ENCODE measurements at regions of chr7 and their contacts with region 1.

Region 1: DNA sequence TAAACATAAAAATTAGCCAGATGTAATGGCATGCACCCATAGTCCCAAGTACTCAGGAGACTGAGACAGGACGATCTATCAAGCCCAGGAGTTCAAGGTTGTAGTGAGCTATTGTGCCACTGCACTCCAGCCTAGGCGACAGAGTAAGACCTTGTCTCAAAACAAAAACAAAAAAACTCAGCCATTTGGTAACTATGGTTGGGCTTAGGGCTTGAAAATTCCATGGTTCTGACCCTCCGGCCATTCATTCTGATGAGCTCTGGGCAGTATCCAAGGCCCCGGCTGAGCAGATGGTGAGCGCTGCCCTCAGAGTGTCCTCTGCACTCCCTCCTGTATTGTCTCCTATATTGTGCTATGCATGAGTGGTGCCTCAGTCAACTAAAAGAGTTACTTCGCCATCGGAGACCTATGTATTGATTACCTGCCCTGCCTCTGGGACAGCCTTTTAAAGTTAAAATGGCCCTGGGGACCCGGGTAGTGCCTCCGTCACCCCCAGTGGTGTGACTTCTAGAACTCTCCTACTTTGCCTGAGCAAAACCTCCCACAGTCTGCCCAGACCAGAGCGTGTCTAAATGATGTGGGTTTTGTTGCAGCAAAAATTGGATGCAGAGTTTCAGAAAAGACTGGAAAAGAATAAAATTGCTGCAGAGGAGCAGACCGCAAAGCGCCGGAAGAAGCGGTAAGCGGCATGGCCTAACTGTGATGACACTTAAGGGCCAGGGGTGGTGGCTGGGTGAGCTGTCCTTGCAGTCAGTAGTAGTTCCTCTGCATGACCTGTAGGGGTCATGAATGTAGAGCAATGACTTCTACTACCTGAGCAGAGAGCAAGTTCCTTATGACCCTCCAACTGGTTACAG is 8.1 kb downstream of the PRKRIP1 start:
- DNase-seq: no peak
- ATAC-seq: peak; percentile 88
- H3K4me3 ChIP-seq: no peak overlapping the region
- H3K27ac ChIP-seq: peak overlapping the region; percentile 6; the same call in 1 of the 2 replicates
- H3K4me1 ChIP-seq: peaks cover 40% of the 10 kb centered on the region
- H3K27me3 ChIP-seq: no peaks in the 10 kb centered on the region
- CTCF ChIP-seq: peak; percentile 87 to 90 (median 89)
- EP300 ChIP-seq: no peak
- POLR2A ChIP-seq: no peak
- RAD21 ChIP-seq: peak; percentile 84

Region 2: GRCh38 chr7:102111744-102112105 is 292.5 kb before region 1 on chr7:
- CTCF ChIA-PET with region 1: no interaction called
- POLR2A ChIA-PET with region 1: no interaction called
- RAD21 ChIA-PET with region 1: no interaction called
- SMC1A ChIA-PET with region 1: no interaction called
- in situ Hi-C with region 1: no loop called
- intact Hi-C with region 1: no loop called
- DNase-seq: no peak
- ATAC-seq: no peak
- H3K4me3 ChIP-seq: no peak overlapping the region
- H3K27ac ChIP-seq: no peak overlapping the region
- H3K4me1 ChIP-seq: no peaks in the 10 kb centered on the region
- H3K27me3 ChIP-seq: no peaks in the 10 kb centered on the region
- CTCF ChIP-seq: no peak
- EP300 ChIP-seq: no peak
- POLR2A ChIP-seq: no peak
- RAD21 ChIP-seq: no peak

Region 3: DNA sequence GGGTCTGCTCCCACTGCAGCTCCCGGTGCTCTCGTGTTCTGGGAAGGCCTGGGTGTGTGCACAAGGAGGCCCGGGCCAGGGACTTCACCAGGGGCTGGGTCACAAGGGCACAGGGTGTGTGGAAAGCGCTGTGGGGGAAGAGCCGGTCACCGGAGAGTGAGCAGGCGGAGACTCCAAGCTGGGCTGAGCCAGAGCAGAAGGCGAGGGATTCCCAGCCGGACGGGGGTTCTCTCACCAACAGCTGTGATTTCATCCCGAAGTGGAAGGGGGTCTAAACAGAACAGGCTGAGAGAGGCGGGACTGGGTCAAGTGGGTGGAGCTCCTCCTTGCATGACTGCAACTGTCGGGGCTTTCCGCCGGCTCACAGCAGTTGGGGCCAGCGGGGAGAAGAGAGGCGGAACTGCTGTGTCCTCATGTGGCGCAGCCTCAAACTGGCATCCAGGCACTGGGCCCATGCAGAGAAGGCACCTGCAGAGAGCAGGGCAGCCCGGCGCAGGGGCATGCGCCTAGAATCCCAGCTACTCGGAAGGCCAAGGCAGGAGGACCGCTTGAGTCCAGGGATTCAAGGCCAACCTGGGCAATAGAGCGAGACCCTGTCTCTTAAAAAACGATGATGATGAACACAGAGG is 21.5 kb after region 1 on chr7:
- CTCF ChIA-PET with region 1: interaction called, 32 read pairs
- POLR2A ChIA-PET with region 1: interaction called, 21 read pairs
- RAD21 ChIA-PET with region 1: interaction called, 26 read pairs
- SMC1A ChIA-PET with region 1: interaction called, 89 read pairs
- in situ Hi-C with region 1: no loop called
- intact Hi-C with region 1: loop called (anchors 1 kb)
- DNase-seq: peak; percentile 84
- ATAC-seq: peak; percentile 84
- H3K4me3 ChIP-seq: peak overlapping the region; percentile 51; the same call in 1 of the 2 replicates
- H3K27ac ChIP-seq: peak overlapping the region; percentile 99
- H3K4me1 ChIP-seq: peaks cover 53% of the 10 kb centered on the region
- H3K27me3 ChIP-seq: no peaks in the 10 kb centered on the region
- CTCF ChIP-seq: no peak
- EP300 ChIP-seq: peak; percentile 78 to 86; a peak in 3 of 4 replicates
- POLR2A ChIP-seq: peak; percentile 91
- RAD21 ChIP-seq: no peak

Region 4: GRCh38 chr7:102433219-102434038 is 29.2 kb after region 1 on chr7 and contains the start of gene ORAI2:
- CTCF ChIA-PET with region 1: interaction called, 39 read pairs
- POLR2A ChIA-PET with region 1: interaction called, 5 read pairs
- RAD21 ChIA-PET with region 1: interaction called, 13 read pairs
- SMC1A ChIA-PET with region 1: interaction called, 89 read pairs
- in situ Hi-C with region 1: no loop called
- intact Hi-C with region 1: no loop called
- DNase-seq: no peak
- ATAC-seq: peak; percentile 58
- H3K4me3 ChIP-seq: peak within 1 kb of the TSS; percentile 74
- H3K27ac ChIP-seq: peak within 1 kb of the TSS; percentile 93
- H3K4me1 ChIP-seq: peaks cover 34% of the 10 kb centered on the region
- H3K27me3 ChIP-seq: no peaks in the 10 kb centered on the region
- CTCF ChIP-seq: 0 out of 6 replicates have a peak, but pooled peaks of 1 of the 3 experiments have one; percentile 2
- EP300 ChIP-seq: no peak
- POLR2A ChIP-seq: peak; percentile 86
- RAD21 ChIP-seq: no peak
- polyA plus RNA-seq, gene ORAI2: 5.8 to 8.0 TPM

Region 5: DNA sequence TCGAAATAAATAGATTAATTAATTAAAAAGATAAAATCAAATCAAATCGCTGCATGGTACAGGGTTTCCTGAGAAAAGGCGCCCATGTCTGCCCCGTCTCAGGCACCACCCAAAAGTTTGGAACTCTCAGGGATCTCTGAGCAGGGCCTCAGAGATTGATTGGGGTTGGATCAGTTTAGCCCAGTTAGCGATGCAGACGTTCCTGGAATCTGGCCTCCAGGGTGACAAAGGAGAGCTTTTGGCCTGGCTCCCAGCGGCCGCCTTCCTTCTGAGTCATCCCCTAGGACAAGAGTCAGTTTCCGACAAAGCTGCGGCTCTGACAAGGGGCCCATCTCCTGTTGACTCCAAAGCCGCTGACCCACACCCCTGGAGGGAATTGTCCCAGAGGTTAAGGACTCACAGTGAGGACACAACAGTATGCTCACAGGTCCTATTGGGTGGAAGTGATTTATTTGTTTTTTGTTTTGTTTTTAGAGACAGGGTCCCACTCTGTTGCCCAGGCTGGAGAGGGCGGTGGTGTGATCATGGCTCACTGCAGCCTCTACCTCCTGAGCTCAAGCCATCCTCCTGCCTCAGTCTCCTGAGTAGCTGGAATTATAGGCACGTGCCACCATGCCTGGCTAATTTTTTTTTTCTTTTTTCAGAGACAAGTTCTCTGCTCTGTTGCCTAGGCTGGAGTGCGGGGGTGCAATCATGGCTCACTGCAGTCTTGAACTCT is 36.0 kb after region 1 on chr7:
- CTCF ChIA-PET with region 1: interaction called, 40 read pairs
- POLR2A ChIA-PET with region 1: interaction called, 24 read pairs
- RAD21 ChIA-PET with region 1: interaction called, 13 read pairs
- SMC1A ChIA-PET with region 1: interaction called, 76 read pairs
- in situ Hi-C with region 1: no loop called
- intact Hi-C with region 1: loop called (anchors 1 kb)
- DNase-seq: no peak
- ATAC-seq: no peak
- H3K4me3 ChIP-seq: no peak overlapping the region
- H3K27ac ChIP-seq: peak overlapping the region; percentile 99; the same call in 1 of the 2 replicates
- H3K4me1 ChIP-seq: peaks cover 44% of the 10 kb centered on the region
- H3K27me3 ChIP-seq: no peaks in the 10 kb centered on the region
- CTCF ChIP-seq: no peak
- EP300 ChIP-seq: no peak
- POLR2A ChIP-seq: no peak
- RAD21 ChIP-seq: no peak

Region 6: DNA sequence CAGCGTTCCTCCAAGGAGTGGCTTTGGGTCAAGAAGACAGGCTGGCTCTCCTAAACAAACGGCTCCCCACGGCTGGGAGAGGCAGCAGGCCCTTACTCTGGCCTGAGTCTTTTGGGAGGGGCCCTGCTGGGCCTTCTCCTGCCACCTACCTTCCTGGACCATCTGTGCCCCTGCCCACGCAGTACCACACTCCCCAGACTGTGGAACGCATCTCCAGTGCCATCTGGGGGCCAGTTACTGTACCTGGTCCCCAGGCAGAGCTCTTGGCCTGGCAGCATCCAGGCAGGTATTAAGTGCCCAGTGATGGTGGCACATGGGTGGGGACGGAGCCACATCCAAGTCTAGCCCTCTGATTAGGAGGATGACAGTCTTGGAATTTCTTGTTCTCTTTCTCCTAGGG is 46.0 kb after region 1 on chr7:
- CTCF ChIA-PET with region 1: interaction called, 101 read pairs
- POLR2A ChIA-PET with region 1: interaction called, 3 read pairs
- RAD21 ChIA-PET with region 1: interaction called, 40 read pairs
- SMC1A ChIA-PET with region 1: interaction called, 76 read pairs
- in situ Hi-C with region 1: loop called (anchors 10 kb)
- intact Hi-C with region 1: loop called (anchors 1 kb)
- DNase-seq: no peak
- ATAC-seq: peak; percentile 91
- H3K4me3 ChIP-seq: no peak overlapping the region
- H3K27ac ChIP-seq: no peak overlapping the region
- H3K4me1 ChIP-seq: peaks cover 10% of the 10 kb centered on the region
- H3K27me3 ChIP-seq: no peaks in the 10 kb centered on the region
- CTCF ChIP-seq: peak; percentile 59 to 76 (median 66)
- EP300 ChIP-seq: no peak
- POLR2A ChIP-seq: peak; percentile 72
- RAD21 ChIP-seq: peak; percentile 80

Region 7: DNA sequence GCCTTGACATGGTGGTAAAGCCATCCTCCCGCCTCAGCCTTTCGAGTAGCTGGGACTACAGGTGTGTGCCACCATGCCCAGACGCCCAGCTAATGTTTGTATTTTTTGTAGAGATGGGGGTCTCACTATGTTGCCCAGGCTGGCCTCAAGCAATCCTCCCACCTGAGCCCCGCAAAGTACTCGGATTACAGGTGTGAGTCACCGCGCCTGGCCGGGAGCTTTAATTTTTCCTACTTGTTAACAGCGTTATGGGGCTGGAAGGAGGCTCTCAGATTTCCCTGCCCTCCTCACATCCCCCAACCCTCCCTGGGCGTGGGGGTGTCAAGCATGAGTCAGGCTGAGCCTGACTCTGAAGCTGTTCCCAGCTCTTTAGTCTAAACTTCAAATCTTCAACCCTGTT is 52.1 kb after region 1 on chr7:
- CTCF ChIA-PET with region 1: interaction called, 101 read pairs
- POLR2A ChIA-PET with region 1: no interaction called
- RAD21 ChIA-PET with region 1: interaction called, 6 read pairs
- SMC1A ChIA-PET with region 1: interaction called, 5 read pairs
- in situ Hi-C with region 1: loop called (anchors 10 kb)
- intact Hi-C with region 1: no loop called
- DNase-seq: no peak
- ATAC-seq: no peak
- H3K4me3 ChIP-seq: no peak overlapping the region
- H3K27ac ChIP-seq: no peak overlapping the region
- H3K4me1 ChIP-seq: no peaks in the 10 kb centered on the region
- H3K27me3 ChIP-seq: no peaks in the 10 kb centered on the region
- CTCF ChIP-seq: no peak
- EP300 ChIP-seq: no peak
- POLR2A ChIP-seq: no peak
- RAD21 ChIP-seq: no peak

Region 8: GRCh38 chr7:102464577-102465280 is 60.5 kb after region 1 on chr7 and contains the starts of genes ALKBH4 and LRWD1:
- CTCF ChIA-PET with region 1: interaction called, 94 read pairs
- POLR2A ChIA-PET with region 1: interaction called, 5 read pairs
- RAD21 ChIA-PET with region 1: interaction called, 7 read pairs
- SMC1A ChIA-PET with region 1: interaction called, 32 read pairs
- in situ Hi-C with region 1: loop called (anchors 10 kb)
- intact Hi-C with region 1: no loop called
- DNase-seq: no peak
- ATAC-seq: peak; percentile 94
- H3K4me3 ChIP-seq: peak within 1 kb of the TSS; percentile 93
- H3K27ac ChIP-seq: peak within 1 kb of the TSS; percentile 89
- H3K4me1 ChIP-seq: peaks cover 15% of the 10 kb centered on the region
- H3K27me3 ChIP-seq: no peaks in the 10 kb centered on the region
- CTCF ChIP-seq: peak in 2 of 3 experiments; percentile 12 to 38; a peak in 4 of 6 replicates
- EP300 ChIP-seq: peak in 1 of 2 experiments; percentile 11; a peak in 1 of 4 replicates
- POLR2A ChIP-seq: peak; percentile 95
- RAD21 ChIP-seq: 0 out of 2 replicates have a peak, but pooled peaks have one; percentile 11
- polyA plus RNA-seq, gene ALKBH4: 4.1 to 9.1 TPM
- polyA plus RNA-seq, gene LRWD1: 0.40 to 2.0 TPM

Measured in GM12878 (cell line).